Activated CD4-positive, alpha-beta memory T cell treated with anti-CD3 and anti-CD28 coated beads, Interleukin-2, amount 10 ng/mL, durations not matched to agents 7 days and 5 days (primary cell): ENCODE measurements at regions of chr1 and their contacts with region 1.

Region 1: GRCh38 chr1:231866392-231867331 is 240.1 kb downstream of the DISC1 start:
- DNase-seq: peak; percentile 64
- H3K4me3 Mint-ChIP-seq: no peak overlapping the region
- H3K27ac Mint-ChIP-seq: no peak overlapping the region
- H3K4me1 Mint-ChIP-seq: peaks cover 11% of the 10 kb centered on the region
- H3K27me3 Mint-ChIP-seq: no peaks in the 10 kb centered on the region

Region 2: GRCh38 chr1:231734417-231734816 is 132.2 kb before region 1 on chr1:
- CTCF ChIA-PET with region 1: no interaction called
- POLR2A ChIA-PET with region 1: no interaction called
- DNase-seq: peak; percentile 22
- H3K4me3 Mint-ChIP-seq: no peak overlapping the region
- H3K27ac Mint-ChIP-seq: no peak overlapping the region
- H3K4me1 Mint-ChIP-seq: no peaks in the 10 kb centered on the region
- H3K27me3 Mint-ChIP-seq: no peaks in the 10 kb centered on the region

Region 3: DNA sequence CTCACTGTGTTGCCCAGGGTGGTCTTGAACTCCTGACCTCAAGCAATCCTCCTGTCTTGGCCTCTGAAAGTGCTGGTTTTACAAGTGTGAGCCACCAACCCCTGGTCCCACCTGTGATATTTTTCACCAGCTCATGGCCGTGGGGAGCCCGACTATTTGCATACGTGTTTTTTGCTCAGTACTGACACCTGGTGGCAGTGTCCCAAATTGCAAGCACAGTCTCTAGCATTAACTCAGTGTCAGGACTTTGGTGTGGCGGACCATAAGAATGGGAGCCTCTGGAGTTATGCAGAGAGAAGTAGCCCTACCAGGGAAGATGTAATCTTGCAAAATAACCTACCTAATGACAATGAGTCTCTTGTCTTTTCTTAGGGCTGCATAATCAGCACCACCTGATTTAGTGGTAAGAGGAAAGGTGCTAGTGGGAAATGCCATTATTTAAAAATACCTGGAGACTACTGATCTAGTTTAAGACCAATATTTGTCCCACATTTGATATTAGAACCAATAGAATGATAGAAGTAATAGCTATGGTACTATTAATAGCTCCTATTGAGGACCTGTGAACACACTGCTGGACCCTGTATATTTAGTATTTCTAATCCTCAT is 65.3 kb after region 1 on chr1:
- CTCF ChIA-PET with region 1: interaction called, 38 read pairs
- POLR2A ChIA-PET with region 1: no interaction called
- DNase-seq: peak; percentile 49
- H3K4me3 Mint-ChIP-seq: no peak overlapping the region
- H3K27ac Mint-ChIP-seq: no peak overlapping the region
- H3K4me1 Mint-ChIP-seq: no peaks in the 10 kb centered on the region
- H3K27me3 Mint-ChIP-seq: peaks cover 2% of the 10 kb centered on the region

Region 4: GRCh38 chr1:232627645-232628334 is 761.1 kb after region 1 on chr1:
- CTCF ChIA-PET with region 1: interaction called, 14 read pairs
- POLR2A ChIA-PET with region 1: no interaction called
- DNase-seq: no peak
- H3K4me3 Mint-ChIP-seq: no peak overlapping the region
- H3K27ac Mint-ChIP-seq: no peak overlapping the region
- H3K4me1 Mint-ChIP-seq: peaks cover 19% of the 10 kb centered on the region
- H3K27me3 Mint-ChIP-seq: peaks cover 33% of the 10 kb centered on the region